ENCODE measurements at regions of chr1 and their contacts with region 1.

Region 1: GRCh38 chr1:170967042-170967910 is 31.9 kb downstream of the MROH9 start:
- DNase-seq: no peak
- H3K4me3 ChIP-seq: no peak overlapping the region
- H3K27ac ChIP-seq: no peak overlapping the region
- H3K4me1 ChIP-seq: no peaks in the 10 kb centered on the region
- H3K27me3 ChIP-seq: no peaks in the 10 kb centered on the region
- CTCF ChIP-seq: peak; percentile 37 to 68 (median 64)

Region 2: GRCh38 chr1:169368406-169368769 is 1598.9 kb before region 1 on chr1:
- intact Hi-C with region 1: no loop called
- DNase-seq: no peak
- H3K4me3 ChIP-seq: peak overlapping the region; percentile 84 to 90
- H3K27ac ChIP-seq: peak overlapping the region; percentile 64 to 80
- H3K4me1 ChIP-seq: peaks cover 0 to 6% of the 10 kb centered on the region in 2 donors
- H3K27me3 ChIP-seq: no peaks in the 10 kb centered on the region
- CTCF ChIP-seq: no peak

Region 3: GRCh38 chr1:171061425-171062143 is 94.3 kb after region 1 on chr1:
- intact Hi-C with region 1: loop called (anchors 5 kb)
- DNase-seq: no peak
- H3K4me3 ChIP-seq: no peak overlapping the region
- H3K27ac ChIP-seq: no peak overlapping the region
- H3K4me1 ChIP-seq: no peaks in the 10 kb centered on the region
- H3K27me3 ChIP-seq: no peaks in the 10 kb centered on the region
- CTCF ChIP-seq: no peak

Measured in ascending aorta (tissue), 2 donors.